Vagina (tissue), 2 donors: ENCODE measurements at regions of chr18 and their contacts with region 1.

Region 1: DNA sequence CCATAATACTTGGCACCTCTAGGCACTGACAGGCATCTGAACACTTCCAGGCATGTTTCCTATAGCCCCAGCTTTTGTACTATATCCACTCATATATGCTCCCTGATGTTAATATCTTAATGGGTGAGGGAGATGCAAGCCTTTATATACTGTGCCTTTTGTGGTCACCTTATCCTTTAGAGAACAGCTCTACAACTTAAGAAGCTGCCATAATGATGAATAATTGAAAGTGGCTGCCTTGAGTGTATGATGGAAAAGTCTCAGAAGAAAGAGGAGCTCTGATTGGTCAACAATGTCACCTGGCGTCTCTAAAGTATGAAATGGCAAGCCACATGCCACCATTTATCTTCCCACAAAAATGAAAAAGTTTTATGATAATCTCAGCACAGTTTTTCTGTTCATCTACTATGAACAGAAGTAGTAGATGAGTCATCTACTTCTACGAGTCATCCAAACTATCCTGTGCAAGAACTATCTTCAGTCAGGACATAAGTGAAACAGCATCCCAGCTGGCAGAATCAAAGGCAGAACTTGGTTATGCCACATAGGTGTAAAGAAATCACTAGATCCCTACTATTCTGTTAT is 997.9 kb upstream of the CELF4 start:
- DNase-seq: no peak
- H3K4me3 ChIP-seq: no peak overlapping the region
- H3K27ac ChIP-seq: no peak overlapping the region
- H3K4me1 ChIP-seq: no peaks in the 10 kb centered on the region
- H3K27me3 ChIP-seq: no peaks in the 10 kb centered on the region
- CTCF ChIP-seq: no peak
- POLR2A ChIP-seq: no peak

Region 2: GRCh38 chr18:37805773-37806404 is 757.6 kb before region 1 on chr18:
- intact Hi-C with region 1: loop called (anchors 10 kb)
- DNase-seq: no peak
- H3K4me3 ChIP-seq: no peak overlapping the region
- H3K27ac ChIP-seq: no peak overlapping the region
- H3K4me1 ChIP-seq: no peaks in the 10 kb centered on the region
- H3K27me3 ChIP-seq: no peaks in the 10 kb centered on the region
- CTCF ChIP-seq: no peak
- POLR2A ChIP-seq: no peak